ENCODE measurements at regions of chr12 and their contacts with region 1.

Region 1: DNA sequence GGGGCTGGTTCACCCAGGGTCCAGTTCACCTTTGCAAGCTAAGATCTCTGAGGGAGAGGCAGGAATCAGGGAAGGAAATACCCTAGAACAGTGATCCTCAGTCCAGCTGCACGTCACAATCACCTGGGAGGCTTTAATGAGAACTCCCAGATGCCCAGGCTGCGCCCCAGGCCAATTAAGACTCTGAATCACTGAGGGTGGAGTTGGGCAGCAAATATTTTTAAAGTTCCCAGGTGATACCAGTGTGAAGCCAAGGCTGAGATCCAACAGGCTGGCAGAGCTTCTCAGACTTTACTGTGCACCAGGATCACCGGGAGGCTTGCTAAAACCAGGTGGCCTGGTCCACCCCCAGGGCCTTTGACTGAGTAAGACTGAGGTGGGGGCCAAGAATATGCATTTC is 23.8 kb downstream of the MYL2 start:
- DNase-seq: no peak
- H3K4me3 ChIP-seq: no peak overlapping the region
- H3K27ac ChIP-seq: no peak overlapping the region
- H3K4me1 ChIP-seq: no peaks in the 10 kb centered on the region
- H3K27me3 ChIP-seq: no peaks in the 10 kb centered on the region
- CTCF ChIP-seq: no peak
- EP300 ChIP-seq: no peak
- POLR2A ChIP-seq: no peak

Region 2: GRCh38 chr12:110846615-110847566 is 49.7 kb before region 1 on chr12 and contains the start of gene CCDC63:
- intact Hi-C with region 1: no loop called
- DNase-seq: peak in 4 of 5 donors; percentile 13 to 59 (median 34)
- H3K4me3 ChIP-seq: peak within 1 kb of the TSS; percentile 16
- H3K27ac ChIP-seq: no peak within 1 kb of the TSS
- H3K4me1 ChIP-seq: peaks cover 3% of the 10 kb centered on the region
- H3K27me3 ChIP-seq: no peaks in the 10 kb centered on the region
- CTCF ChIP-seq: no peak
- EP300 ChIP-seq: no peak
- POLR2A ChIP-seq: no peak
- total RNA-seq, gene CCDC63: not detected

Region 3: DNA sequence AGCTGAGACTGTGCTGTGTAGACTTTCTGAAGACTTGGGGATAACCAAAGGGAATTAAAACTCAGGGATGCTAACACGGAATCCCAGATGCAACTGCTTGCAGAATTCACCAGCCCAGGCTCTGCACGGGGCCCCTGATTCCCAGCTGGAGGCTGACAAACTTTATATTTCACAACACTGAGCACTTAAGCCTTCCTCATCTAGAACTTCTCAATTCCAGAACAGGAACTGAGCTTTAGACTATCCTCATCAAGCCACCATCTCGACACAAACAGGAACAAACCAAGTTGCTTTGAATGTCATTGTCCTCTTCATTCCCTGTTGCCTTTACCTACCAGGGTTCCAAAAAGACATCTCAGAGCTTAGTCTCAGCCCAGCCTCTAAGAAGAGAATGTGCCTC is 27.5 kb before region 1 on chr12:
- intact Hi-C with region 1: no loop called
- DNase-seq: no peak
- H3K4me3 ChIP-seq: no peak overlapping the region
- H3K27ac ChIP-seq: no peak overlapping the region
- H3K4me1 ChIP-seq: no peaks in the 10 kb centered on the region
- H3K27me3 ChIP-seq: no peaks in the 10 kb centered on the region
- CTCF ChIP-seq: no peak
- EP300 ChIP-seq: no peak
- POLR2A ChIP-seq: no peak

Region 4: GRCh38 chr12:111304642-111305071 is 408.1 kb after region 1 on chr12:
- intact Hi-C with region 1: loop called in 1 of 4 experiments (anchors 10 kb)
- DNase-seq: no peak
- H3K4me3 ChIP-seq: no peak overlapping the region
- H3K27ac ChIP-seq: no peak overlapping the region
- H3K4me1 ChIP-seq: no peaks in the 10 kb centered on the region
- H3K27me3 ChIP-seq: no peaks in the 10 kb centered on the region
- CTCF ChIP-seq: no peak
- EP300 ChIP-seq: no peak
- POLR2A ChIP-seq: no peak

Region 5: DNA sequence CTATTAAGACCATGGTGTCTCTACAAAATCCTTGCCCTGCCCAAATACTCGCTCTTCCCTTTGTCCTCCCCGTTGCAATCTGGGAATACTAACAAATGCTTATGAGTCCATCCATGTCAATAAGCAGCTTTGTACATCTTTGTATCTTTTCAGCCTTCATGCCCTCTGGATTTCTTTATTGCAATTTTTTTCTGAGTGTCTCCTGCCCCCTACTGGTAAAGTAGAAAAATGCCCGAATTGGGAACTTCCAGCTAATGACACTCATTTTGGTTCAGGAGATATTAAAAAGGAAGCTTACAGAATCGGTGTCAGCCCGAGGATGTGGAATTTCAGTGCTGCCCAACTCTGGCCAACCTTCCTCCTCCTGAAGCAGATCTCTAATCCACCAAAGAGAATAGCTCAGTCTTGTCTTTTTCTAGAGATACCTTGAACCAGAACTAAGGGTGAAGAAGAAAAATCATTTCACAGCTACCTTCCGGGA is 555.1 kb after region 1 on chr12:
- intact Hi-C with region 1: loop called in 1 of 4 experiments (anchors 5 kb)
- DNase-seq: no peak
- H3K4me3 ChIP-seq: no peak overlapping the region
- H3K27ac ChIP-seq: no peak overlapping the region
- H3K4me1 ChIP-seq: no peaks in the 10 kb centered on the region
- H3K27me3 ChIP-seq: no peaks in the 10 kb centered on the region
- CTCF ChIP-seq: peak; percentile 57 to 81 (median 75)
- EP300 ChIP-seq: no peak
- POLR2A ChIP-seq: no peak

Region 6: DNA sequence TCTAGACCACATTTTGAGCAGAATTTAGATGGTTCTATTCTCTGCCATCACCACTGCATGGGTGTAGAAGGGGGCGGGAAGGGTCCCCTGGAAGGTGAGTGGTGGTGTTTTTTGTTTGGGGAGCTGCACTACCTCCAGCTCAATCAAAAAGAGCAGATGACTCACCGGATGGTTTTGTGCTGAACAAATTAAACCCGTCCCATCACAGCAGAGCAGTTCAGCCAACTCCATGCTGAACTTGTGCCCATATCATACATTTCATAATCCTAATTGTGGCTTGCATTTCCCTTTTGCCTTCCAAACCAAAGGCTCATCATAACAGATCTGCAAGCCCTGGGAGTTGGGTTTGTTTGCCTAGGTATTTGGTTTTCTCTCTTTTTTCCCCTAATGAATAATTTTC is 1842.0 kb after region 1 on chr12:
- intact Hi-C with region 1: no loop called
- DNase-seq: no peak
- H3K4me3 ChIP-seq: no peak overlapping the region
- H3K27ac ChIP-seq: no peak overlapping the region
- H3K4me1 ChIP-seq: no peaks in the 10 kb centered on the region
- H3K27me3 ChIP-seq: no peaks in the 10 kb centered on the region
- CTCF ChIP-seq: no peak
- EP300 ChIP-seq: no peak
- POLR2A ChIP-seq: no peak

Measured in ovary (tissue), 10 donors.